ENCODE measurements at regions of chr17 and their contacts with region 1.

Region 1: DNA sequence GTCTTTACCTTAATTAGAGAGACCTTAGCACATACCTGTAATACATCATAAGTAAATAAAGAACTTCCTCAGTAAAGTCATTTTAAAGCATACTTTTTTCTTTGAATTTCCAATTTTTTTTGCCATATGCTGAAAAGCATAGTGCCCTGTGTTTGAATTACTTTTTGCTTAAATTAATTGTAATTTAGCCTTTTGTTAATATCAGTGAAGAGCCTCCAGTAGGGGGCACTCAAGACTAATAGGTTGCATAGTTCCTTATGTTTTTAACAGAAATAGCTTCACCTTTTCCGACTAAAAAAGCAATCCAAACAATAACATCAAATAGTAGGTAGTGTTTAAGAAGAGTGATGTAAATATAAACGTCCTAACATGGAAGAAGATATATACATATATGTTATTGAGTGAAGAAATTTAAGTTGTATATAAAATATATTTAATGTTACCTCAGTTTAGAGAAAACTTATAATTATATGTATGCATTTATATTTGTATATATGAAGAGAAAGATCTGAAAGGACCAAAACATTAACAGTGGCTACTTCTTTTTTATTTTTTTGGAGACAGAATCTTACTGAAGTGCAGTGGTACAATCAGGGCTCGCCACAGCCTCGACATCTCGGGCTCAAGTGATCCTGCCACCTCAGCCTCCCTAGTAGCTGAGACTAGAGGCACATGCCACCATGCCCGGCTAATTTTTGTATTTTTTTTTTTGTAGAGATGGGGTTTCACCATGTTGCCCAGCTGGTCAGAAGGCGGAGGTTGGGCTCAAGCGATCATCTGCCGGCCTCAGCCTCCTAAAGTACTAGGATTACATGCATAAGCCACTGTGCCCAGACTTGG is 18.8 kb downstream of the RAD51C start:
- DNase-seq: peak; percentile 49
- H3K4me3 ChIP-seq: no peak overlapping the region; a peak in 1 of 4 replicates
- H3K27ac ChIP-seq: no peak overlapping the region
- H3K4me1 ChIP-seq: no peaks in the 10 kb centered on the region
- H3K27me3 ChIP-seq: no peaks in the 10 kb centered on the region
- CTCF ChIP-seq: peak; percentile 99
- EP300 ChIP-seq: no peak
- RAD21 ChIP-seq: peak; percentile 97

Region 2: GRCh38 chr17:58352014-58352842 is 358.9 kb before region 1 on chr17 and contains the start of gene SUPT4H1:
- CTCF ChIA-PET with region 1: no interaction called
- POLR2A ChIA-PET with region 1: no interaction called
- DNase-seq: peak; percentile 99
- H3K4me3 ChIP-seq: peak within 1 kb of the TSS; percentile 74 to 99
- H3K27ac ChIP-seq: peak within 1 kb of the TSS; percentile 69 to 80
- H3K4me1 ChIP-seq: peaks cover 0 to 10% of the 10 kb centered on the region in 2 experiments; a peak in 2 of 4 replicates
- H3K27me3 ChIP-seq: no peaks in the 10 kb centered on the region
- CTCF ChIP-seq: no peak
- EP300 ChIP-seq: peak; percentile 1 to 51; a peak in 1 of 4 replicates
- RAD21 ChIP-seq: no peak
- polyA plus RNA-seq, gene SUPT4H1: 165 and 205 TPM in 2 replicates

Region 3: GRCh38 chr17:58517734-58518609 is 193.2 kb before region 1 on chr17:
- CTCF ChIA-PET with region 1: interaction called, 15 read pairs
- POLR2A ChIA-PET with region 1: no interaction called
- DNase-seq: peak; percentile 96
- H3K4me3 ChIP-seq: peak overlapping the region; percentile 87 to 95
- H3K27ac ChIP-seq: peak overlapping the region; percentile 92 to 97
- H3K4me1 ChIP-seq: peaks cover 5 to 25% of the 10 kb centered on the region in 2 experiments; a peak in 2 of 4 replicates
- H3K27me3 ChIP-seq: no peaks in the 10 kb centered on the region
- CTCF ChIP-seq: no peak
- EP300 ChIP-seq: peak; percentile 18 to 30; a peak in 2 of 4 replicates
- RAD21 ChIP-seq: no peak

Region 4: DNA sequence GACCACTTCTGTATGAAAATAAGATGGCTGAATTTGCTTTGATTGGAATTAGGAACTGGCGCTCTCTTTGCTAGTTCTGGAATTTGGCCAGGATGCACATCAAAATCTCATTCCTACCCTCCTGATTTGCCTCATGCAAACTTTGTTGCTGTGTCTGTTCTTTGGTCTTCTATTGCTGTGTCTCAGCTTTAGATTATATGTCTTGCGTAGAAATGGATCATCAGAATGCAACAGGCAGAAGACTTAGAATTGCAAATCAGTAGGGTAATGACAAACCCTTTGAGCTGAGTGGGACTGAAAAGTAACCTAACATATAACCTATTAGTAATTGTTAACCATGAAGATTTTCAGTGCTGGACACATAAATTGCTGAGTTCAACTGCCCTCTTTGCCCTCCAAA is 11.5 kb after region 1 on chr17:
- CTCF ChIA-PET with region 1: interaction called, 16 read pairs
- POLR2A ChIA-PET with region 1: no interaction called
- DNase-seq: no peak
- H3K4me3 ChIP-seq: no peak overlapping the region
- H3K27ac ChIP-seq: no peak overlapping the region
- H3K4me1 ChIP-seq: no peaks in the 10 kb centered on the region
- H3K27me3 ChIP-seq: no peaks in the 10 kb centered on the region
- CTCF ChIP-seq: no peak
- EP300 ChIP-seq: no peak
- RAD21 ChIP-seq: no peak

Region 5: DNA sequence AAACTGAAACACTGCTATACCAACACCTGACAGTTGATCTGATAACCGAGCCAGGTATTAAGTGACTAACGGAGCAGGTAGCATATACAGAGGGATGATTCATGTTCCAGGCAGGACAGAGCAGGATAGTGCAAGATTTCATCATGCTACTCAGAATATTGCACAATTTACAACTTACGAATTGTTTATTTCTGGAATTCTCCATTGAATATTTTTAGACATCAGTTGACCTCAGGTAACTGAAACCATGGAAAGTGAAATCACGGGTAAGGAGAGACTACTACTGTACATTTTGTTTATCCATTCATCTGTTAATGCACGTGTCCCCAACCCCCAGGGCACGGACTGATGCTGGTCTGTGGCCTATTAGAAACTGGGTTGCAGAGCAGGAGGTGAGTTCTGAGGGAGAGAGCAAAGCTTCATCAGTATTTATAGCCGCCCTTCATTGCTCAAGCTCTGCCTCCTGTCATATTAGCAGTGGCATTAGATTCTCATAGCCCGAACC is 30.0 kb after region 1 on chr17:
- CTCF ChIA-PET with region 1: interaction called, 10 read pairs
- POLR2A ChIA-PET with region 1: no interaction called
- DNase-seq: no peak
- H3K4me3 ChIP-seq: no peak overlapping the region
- H3K27ac ChIP-seq: no peak overlapping the region
- H3K4me1 ChIP-seq: no peaks in the 10 kb centered on the region
- H3K27me3 ChIP-seq: no peaks in the 10 kb centered on the region
- CTCF ChIP-seq: no peak
- EP300 ChIP-seq: no peak
- RAD21 ChIP-seq: no peak

Region 6: DNA sequence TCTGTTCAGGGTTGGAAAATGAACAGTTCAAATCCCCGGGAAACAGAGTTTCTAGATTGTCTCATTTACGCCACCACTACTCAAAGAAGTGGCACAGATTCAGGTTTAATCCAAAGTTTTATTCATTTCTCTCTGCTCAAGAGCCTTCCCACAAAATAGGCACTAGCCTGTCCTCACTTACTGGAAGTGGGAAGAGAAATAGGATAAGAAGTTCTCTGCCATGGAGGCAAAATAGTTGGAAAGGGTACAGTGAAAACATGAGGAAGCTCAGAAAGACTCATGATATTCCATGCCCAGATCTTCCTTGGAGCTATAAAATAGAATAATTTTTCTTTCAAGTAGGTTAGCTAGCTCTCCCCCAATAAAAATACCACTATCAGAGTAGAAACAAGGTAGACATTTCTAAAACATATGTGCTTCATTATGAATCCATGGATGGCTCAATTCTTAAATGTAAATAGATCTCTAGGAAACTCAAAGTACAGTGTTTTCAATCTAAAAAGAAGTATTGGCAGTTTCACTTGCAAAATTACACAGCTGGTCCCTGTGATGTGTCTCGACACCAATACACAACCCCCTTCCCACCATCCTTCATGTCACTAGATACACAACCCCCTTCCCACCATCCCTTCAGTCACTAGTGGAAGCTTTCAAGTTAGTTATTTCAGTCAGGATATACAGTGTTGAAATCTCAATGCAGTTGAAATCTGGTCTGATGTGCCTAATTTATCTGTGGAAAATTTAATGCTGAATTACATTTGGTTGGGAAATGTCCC is 269.7 kb after region 1 on chr17:
- CTCF ChIA-PET with region 1: interaction called, 13 read pairs
- POLR2A ChIA-PET with region 1: no interaction called
- DNase-seq: no peak
- H3K4me3 ChIP-seq: no peak overlapping the region
- H3K27ac ChIP-seq: no peak overlapping the region; a peak in 1 of 4 replicates
- H3K4me1 ChIP-seq: peaks cover 0 to 6% of the 10 kb centered on the region in 2 experiments; a peak in 2 of 4 replicates
- H3K27me3 ChIP-seq: no peaks in the 10 kb centered on the region
- CTCF ChIP-seq: no peak
- EP300 ChIP-seq: no peak
- RAD21 ChIP-seq: no peak

Region 7: GRCh38 chr17:59004338-59005111 is 293.4 kb after region 1 on chr17:
- CTCF ChIA-PET with region 1: interaction called, 204 read pairs
- POLR2A ChIA-PET with region 1: interaction called, 4 read pairs
- DNase-seq: peak; percentile 63
- H3K4me3 ChIP-seq: no peak overlapping the region; a peak in 1 of 4 replicates
- H3K27ac ChIP-seq: no peak overlapping the region
- H3K4me1 ChIP-seq: peaks cover 0 to 5% of the 10 kb centered on the region in 2 experiments; a peak in 2 of 4 replicates
- H3K27me3 ChIP-seq: no peaks in the 10 kb centered on the region
- CTCF ChIP-seq: peak; percentile 100
- EP300 ChIP-seq: no peak
- RAD21 ChIP-seq: peak; percentile 98